Ovary (tissue), 10 donors: ENCODE measurements at regions of chr4 and their contacts with region 1.

Region 1: GRCh38 chr4:158253350-158253980 is 43.2 kb downstream of the TMEM144 start:
- DNase-seq: peak in 4 of 5 donors; percentile 39 to 62 (median 46)
- H3K4me3 ChIP-seq: no peak overlapping the region
- H3K27ac ChIP-seq: no peak overlapping the region
- H3K4me1 ChIP-seq: no peaks in the 10 kb centered on the region
- H3K27me3 ChIP-seq: no peaks in the 10 kb centered on the region
- CTCF ChIP-seq: peak in 2 of 3 donors; percentile 44 to 59
- EP300 ChIP-seq: no peak
- POLR2A ChIP-seq: no peak

Region 2: GRCh38 chr4:157978680-157979361 is 274.6 kb before region 1 on chr4:
- intact Hi-C with region 1: loop called in 1 of 4 experiments (anchors 10 kb)
- DNase-seq: peak; percentile 21 to 62 (median 49)
- H3K4me3 ChIP-seq: no peak overlapping the region
- H3K27ac ChIP-seq: no peak overlapping the region
- H3K4me1 ChIP-seq: no peaks in the 10 kb centered on the region
- H3K27me3 ChIP-seq: no peaks in the 10 kb centered on the region
- CTCF ChIP-seq: peak; percentile 53 to 66 (median 65)
- EP300 ChIP-seq: no peak
- POLR2A ChIP-seq: no peak

Region 3: DNA sequence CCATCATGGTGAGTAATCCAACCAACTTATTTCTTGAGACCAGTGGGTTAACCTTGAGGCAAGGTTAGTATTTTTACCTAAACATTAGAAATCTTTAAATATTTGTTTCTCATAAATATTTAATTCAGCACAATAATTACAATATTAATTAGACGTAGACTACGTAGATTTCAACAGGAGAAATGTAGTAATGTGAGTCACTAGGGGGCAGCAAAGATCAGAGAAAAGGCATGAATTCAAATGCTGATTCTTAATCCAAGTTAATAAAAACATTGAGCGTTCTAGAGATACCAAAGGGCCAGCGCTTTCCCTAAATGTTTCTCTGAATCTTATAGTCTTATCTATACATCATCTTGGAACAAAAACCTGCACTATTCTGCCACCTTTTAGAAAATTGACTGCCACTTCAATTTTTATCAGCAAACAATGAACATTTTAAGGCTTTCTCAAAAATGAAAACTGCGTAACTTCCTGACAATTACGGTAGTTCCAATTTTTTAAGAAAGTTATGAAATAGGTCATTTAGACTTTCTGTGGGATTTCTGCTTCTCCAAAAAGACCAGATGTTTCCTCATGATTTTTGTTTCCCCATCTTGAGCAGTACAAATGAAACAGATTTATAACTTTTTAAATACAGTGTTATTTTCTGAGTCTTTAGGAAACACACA is 261.3 kb before region 1 on chr4:
- intact Hi-C with region 1: loop called in 2 of 4 experiments (anchors 10 kb)
- DNase-seq: peak in 3 of 5 donors; percentile 30 to 65 (median 36)
- H3K4me3 ChIP-seq: peak overlapping the region; percentile 34
- H3K27ac ChIP-seq: peak overlapping the region; percentile 64 to 86
- H3K4me1 ChIP-seq: peaks cover 7% of the 10 kb centered on the region
- H3K27me3 ChIP-seq: no peaks in the 10 kb centered on the region
- CTCF ChIP-seq: peak; percentile 79 to 96 (median 83)
- EP300 ChIP-seq: no peak
- POLR2A ChIP-seq: no peak

Region 4: GRCh38 chr4:158229768-158230167 is 23.7 kb before region 1 on chr4:
- intact Hi-C with region 1: no loop called
- DNase-seq: no peak
- H3K4me3 ChIP-seq: no peak overlapping the region
- H3K27ac ChIP-seq: no peak overlapping the region
- H3K4me1 ChIP-seq: no peaks in the 10 kb centered on the region
- H3K27me3 ChIP-seq: no peaks in the 10 kb centered on the region
- CTCF ChIP-seq: no peak
- EP300 ChIP-seq: no peak
- POLR2A ChIP-seq: no peak

Region 5: GRCh38 chr4:158376106-158376840 is 122.8 kb after region 1 on chr4:
- intact Hi-C with region 1: no loop called
- DNase-seq: no peak
- H3K4me3 ChIP-seq: no peak overlapping the region
- H3K27ac ChIP-seq: no peak overlapping the region
- H3K4me1 ChIP-seq: no peaks in the 10 kb centered on the region
- H3K27me3 ChIP-seq: no peaks in the 10 kb centered on the region
- CTCF ChIP-seq: no peak
- EP300 ChIP-seq: no peak
- POLR2A ChIP-seq: no peak

Region 6: DNA sequence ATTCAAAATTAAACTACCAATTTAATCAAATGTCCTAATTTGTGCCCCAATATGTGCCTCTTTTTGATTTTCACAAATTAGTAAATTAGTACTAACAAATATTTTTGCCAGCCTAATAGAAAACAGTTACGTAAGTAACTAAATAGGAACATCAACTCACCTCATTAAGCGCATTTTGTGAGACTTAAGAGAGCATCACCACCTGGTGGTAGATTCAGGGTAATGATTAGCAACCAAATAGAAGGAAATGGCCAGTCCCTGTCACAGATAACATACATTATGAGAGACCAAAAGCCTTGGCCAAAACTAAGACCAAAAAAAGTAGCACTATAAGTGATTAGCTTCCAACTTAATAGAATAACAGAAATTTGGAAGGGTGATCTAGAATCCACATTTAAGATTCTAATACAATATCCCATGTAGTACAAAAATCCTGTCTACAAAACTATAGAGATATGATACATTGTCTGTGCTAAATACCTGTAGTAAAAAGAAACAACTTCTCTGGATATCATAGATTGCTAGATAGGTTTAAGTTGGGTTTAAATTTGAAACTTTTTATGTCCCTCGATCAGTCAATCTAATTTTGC is 371.5 kb after region 1 on chr4:
- intact Hi-C with region 1: loop called in 1 of 4 experiments (anchors 10 kb)
- DNase-seq: no peak
- H3K4me3 ChIP-seq: no peak overlapping the region
- H3K27ac ChIP-seq: no peak overlapping the region
- H3K4me1 ChIP-seq: no peaks in the 10 kb centered on the region
- H3K27me3 ChIP-seq: no peaks in the 10 kb centered on the region
- CTCF ChIP-seq: no peak
- EP300 ChIP-seq: no peak
- POLR2A ChIP-seq: no peak

Region 7: DNA sequence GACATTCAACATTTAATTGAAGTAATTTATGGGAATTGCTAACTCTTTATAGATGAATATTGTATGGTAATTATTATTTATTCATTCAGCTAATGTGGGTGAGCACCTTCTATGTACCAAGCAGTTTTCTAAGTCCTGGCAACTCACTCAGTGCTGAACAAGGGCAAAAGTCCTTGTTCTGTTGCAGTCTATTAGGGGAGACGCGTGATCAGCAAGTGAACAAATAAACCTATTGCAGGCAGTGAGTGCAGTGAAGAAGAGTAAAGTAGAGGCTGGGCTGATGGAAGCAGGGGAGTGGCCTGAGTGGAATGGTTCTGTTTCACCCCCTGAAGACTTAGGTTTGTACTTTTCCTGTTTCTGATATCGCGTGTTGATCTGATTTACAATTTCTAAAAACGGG is 1063.7 kb after region 1 on chr4:
- intact Hi-C with region 1: no loop called
- DNase-seq: no peak
- H3K4me3 ChIP-seq: no peak overlapping the region
- H3K27ac ChIP-seq: no peak overlapping the region
- H3K4me1 ChIP-seq: peaks cover 2% of the 10 kb centered on the region
- H3K27me3 ChIP-seq: no peaks in the 10 kb centered on the region
- CTCF ChIP-seq: no peak
- EP300 ChIP-seq: no peak
- POLR2A ChIP-seq: no peak